ENCODE measurements at regions of chrX and their contacts with region 1.

Region 1: DNA sequence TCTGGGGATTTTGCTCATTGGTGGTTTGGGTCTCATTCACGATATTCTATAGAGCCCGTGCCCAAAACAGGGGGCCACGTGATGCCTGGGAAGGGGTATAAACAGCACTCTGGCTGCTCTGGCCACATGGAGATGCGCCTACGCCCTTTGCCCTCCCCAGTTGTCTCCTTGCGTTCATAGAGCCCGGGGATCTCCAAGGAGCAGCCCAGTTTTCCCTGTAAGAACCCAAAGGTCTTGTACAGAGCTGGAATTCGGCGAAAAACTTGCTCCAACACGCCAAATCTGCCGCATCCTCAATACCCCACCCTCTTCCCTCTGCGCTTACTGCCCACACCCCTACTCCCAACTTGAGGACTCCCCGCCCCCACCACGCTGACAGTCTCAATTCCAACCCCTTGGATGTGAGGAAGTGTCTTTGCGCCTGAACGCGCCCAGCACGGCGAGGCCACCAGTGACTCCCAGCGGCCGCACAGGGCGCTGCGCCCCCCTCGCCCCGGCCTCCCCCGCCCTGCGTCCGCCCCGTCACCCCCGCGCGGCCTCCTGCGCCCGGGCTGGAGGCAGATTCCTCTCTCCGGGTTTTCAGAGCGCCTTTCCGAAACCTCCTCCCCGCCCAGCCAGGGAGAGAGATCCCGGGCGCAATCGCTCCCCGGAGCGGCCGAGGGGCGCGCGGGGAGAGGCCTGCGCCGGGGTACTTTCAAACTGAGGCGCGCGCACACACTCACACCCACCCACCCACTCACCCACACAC is at the start of gene NHS:
- DNase-seq: peak; percentile 51 to 73
- H3K4me3 ChIP-seq: peak within 1 kb of the TSS; percentile 83
- H3K27ac ChIP-seq: 0 out of 2 replicates have a peak within 1 kb of the TSS, but pooled peaks have one; percentile 16
- H3K4me1 ChIP-seq: peaks cover 14% of the 10 kb centered on the region
- H3K27me3 ChIP-seq: no peaks in the 10 kb centered on the region
- CTCF ChIP-seq: peak; percentile 53
- total RNA-seq, gene NHS: 6.0 and 6.7 TPM in 2 replicates

Region 2: GRCh38 chrX:17242470-17242869 is 132.3 kb before region 1 on chrX:
- CTCF ChIA-PET with region 1: no interaction called
- POLR2A ChIA-PET with region 1: no interaction called
- intact Hi-C with region 1: loop called (anchors 2 kb)
- DNase-seq: peak; percentile 28 to 35
- H3K4me3 ChIP-seq: no peak overlapping the region
- H3K27ac ChIP-seq: no peak overlapping the region
- H3K4me1 ChIP-seq: no peaks in the 10 kb centered on the region
- H3K27me3 ChIP-seq: no peaks in the 10 kb centered on the region
- CTCF ChIP-seq: peak; percentile 82

Region 3: GRCh38 chrX:17496407-17496806 is 121.6 kb after region 1 on chrX:
- CTCF ChIA-PET with region 1: no interaction called
- POLR2A ChIA-PET with region 1: no interaction called
- intact Hi-C with region 1: loop called (anchors 2 kb)
- DNase-seq: peak; percentile 38 to 73
- H3K4me3 ChIP-seq: no peak overlapping the region
- H3K27ac ChIP-seq: peak overlapping the region; percentile 47
- H3K4me1 ChIP-seq: peaks cover 81% of the 10 kb centered on the region
- H3K27me3 ChIP-seq: no peaks in the 10 kb centered on the region
- CTCF ChIP-seq: no peak

Region 4: GRCh38 chrX:17559728-17560379 is 185.1 kb after region 1 on chrX:
- CTCF ChIA-PET with region 1: no interaction called
- POLR2A ChIA-PET with region 1: no interaction called
- intact Hi-C with region 1: loop called (anchors 10 kb)
- DNase-seq: peak; percentile 63 to 92
- H3K4me3 ChIP-seq: peak overlapping the region; percentile 29; the same call in 1 of the 2 replicates
- H3K27ac ChIP-seq: peak overlapping the region; percentile 90
- H3K4me1 ChIP-seq: peaks cover 50% of the 10 kb centered on the region
- H3K27me3 ChIP-seq: no peaks in the 10 kb centered on the region
- CTCF ChIP-seq: no peak; the same call in 1 of the 2 replicates

Region 5: DNA sequence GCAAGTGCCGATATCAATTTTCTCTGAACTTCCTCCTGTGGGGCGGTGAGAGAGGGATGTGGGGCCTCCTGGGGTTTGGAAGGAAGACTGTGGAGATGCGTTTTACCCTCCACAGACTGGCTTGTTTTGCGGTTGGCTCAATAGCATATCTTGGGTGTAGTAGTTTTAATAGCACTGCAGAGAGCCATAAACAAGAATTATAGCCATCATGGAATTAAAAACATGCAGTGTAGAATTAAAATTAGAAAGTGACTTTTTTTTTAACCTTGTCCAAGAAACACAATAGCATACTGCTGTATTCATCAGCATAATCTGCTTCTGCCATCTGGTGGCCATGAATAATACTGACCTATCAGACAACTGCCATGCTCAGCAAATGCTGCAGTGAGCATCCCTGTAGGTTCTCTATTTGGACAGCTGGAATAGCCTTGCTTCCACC is 315.2 kb after region 1 on chrX:
- CTCF ChIA-PET with region 1: no interaction called
- POLR2A ChIA-PET with region 1: no interaction called
- intact Hi-C with region 1: loop called (anchors 5 kb)
- DNase-seq: peak; percentile 31 to 63
- H3K4me3 ChIP-seq: no peak overlapping the region
- H3K27ac ChIP-seq: no peak overlapping the region
- H3K4me1 ChIP-seq: 0 out of 2 replicates have a peak, but pooled peaks cover 6% of the 10 kb centered on the region
- H3K27me3 ChIP-seq: no peaks in the 10 kb centered on the region
- CTCF ChIP-seq: peak; percentile 82

Measured in PC-9 (cell line).